Calu3 (cell line): ENCODE measurements at regions of chr7 and their contacts with region 1.

Region 1: DNA sequence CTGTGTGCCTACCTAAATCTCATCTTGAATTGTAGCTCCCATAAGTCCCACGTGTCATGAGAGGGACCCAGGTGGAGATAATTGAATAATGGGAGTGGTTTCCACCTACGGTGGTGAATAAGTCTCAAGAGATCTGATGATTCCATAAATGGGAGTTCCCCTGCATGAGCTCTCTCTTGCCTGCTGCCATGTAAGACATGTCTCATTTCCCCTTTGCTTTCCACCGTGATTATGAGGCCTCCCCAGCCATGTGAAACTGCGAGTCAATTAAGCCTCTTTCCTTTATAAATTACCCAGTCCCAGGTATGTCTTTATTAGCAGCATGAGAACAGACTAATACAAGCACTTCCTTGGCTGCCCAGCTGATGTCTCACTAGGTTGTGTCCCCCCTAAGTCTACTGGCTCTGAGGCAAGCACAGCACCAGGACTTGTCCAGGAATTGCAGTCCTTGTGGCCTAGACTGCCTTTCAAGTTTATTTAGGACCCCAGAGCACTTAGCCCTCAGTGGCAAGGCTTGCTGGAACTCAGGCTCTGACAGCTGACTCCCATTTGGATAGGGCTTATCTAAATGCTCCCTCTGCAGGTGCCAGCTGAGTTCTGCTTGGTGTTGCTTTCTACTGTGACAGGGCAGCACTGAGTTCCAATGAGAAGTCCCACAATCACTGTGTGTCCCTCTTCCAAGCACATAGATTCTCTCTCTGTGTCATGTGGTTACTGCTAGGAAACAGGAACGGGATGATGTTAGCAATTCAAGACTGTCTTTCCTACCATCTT is 59.0 kb upstream of the TAS2R16 start:
- DNase-seq: peak; percentile 18
- H3K4me3 Mint-ChIP-seq: no peak overlapping the region
- H3K27ac Mint-ChIP-seq: no peak overlapping the region
- H3K4me1 Mint-ChIP-seq: no peaks in the 10 kb centered on the region
- H3K27me3 Mint-ChIP-seq: no peaks in the 10 kb centered on the region
- CTCF ChIP-seq: no peak

Region 2: DNA sequence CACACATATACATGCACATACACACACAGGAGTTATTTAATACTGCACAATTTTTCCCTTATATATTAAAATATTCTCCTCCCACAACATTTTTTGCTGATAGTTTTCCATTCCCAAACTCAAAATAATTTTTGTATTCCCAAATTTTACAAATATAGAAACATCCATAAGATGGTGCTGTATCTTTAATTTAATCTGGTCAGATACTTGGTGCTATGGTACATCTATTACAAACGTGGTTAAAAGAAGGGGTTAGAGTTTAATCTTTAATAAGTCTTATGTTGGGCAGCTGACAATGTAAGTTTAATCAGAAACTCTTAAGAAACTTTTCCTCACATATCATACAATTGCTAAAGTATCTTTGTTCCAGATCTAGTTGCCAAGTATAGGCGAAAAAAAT is 158.0 kb before region 1 on chr7:
- CTCF ChIA-PET with region 1: no interaction called
- intact Hi-C with region 1: loop called (anchors 5 kb)
- DNase-seq: no peak
- H3K4me3 Mint-ChIP-seq: no peak overlapping the region
- H3K27ac Mint-ChIP-seq: no peak overlapping the region
- H3K4me1 Mint-ChIP-seq: no peaks in the 10 kb centered on the region
- H3K27me3 Mint-ChIP-seq: no peaks in the 10 kb centered on the region
- CTCF ChIP-seq: no peak

Region 3: GRCh38 chr7:123041101-123041500 is 13.4 kb before region 1 on chr7:
- CTCF ChIA-PET with region 1: no interaction called
- intact Hi-C with region 1: no loop called
- DNase-seq: no peak
- H3K4me3 Mint-ChIP-seq: no peak overlapping the region
- H3K27ac Mint-ChIP-seq: no peak overlapping the region
- H3K4me1 Mint-ChIP-seq: no peaks in the 10 kb centered on the region
- H3K27me3 Mint-ChIP-seq: no peaks in the 10 kb centered on the region
- CTCF ChIP-seq: no peak

Region 4: DNA sequence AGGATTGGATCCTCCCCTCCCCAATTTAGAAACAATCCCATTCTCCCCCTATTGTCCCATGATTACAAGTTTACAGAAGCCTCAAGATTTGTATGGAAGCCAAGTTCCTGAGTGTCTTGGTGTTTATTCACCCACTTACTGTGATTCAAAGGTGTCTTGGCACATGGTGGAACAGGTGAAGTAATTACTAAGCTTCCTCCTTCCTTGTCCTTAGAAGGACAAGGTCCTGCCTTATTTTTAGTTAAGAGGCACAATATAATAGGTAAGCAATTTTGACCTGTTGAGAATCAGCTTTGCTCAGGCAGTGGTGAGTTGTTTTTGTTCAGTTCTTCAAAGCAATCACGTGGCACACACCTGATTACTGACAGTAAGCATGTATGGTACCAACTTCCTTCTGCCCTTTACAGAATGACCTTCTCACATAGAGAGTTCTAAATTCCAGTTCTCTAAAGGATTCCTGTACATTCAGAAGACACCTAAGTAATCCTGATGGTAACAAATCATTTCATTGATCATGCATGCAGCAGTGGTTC is 205.9 kb after region 1 on chr7:
- CTCF ChIA-PET with region 1: no interaction called
- intact Hi-C with region 1: no loop called
- DNase-seq: no peak
- H3K4me3 Mint-ChIP-seq: no peak overlapping the region
- H3K27ac Mint-ChIP-seq: no peak overlapping the region
- H3K4me1 Mint-ChIP-seq: no peaks in the 10 kb centered on the region
- H3K27me3 Mint-ChIP-seq: no peaks in the 10 kb centered on the region
- CTCF ChIP-seq: no peak